ENCODE measurements at regions of chr12 and their contacts with region 1.

Region 1: GRCh38 chr12:121095544-121096198 is 37.0 kb upstream of the P2RX7 start:
- DNase-seq: no peak
- H3K4me3 ChIP-seq: peak overlapping the region in 1 of 3 experiments; percentile 0
- H3K27ac ChIP-seq: no peak overlapping the region
- H3K4me1 ChIP-seq: peaks cover 5% of the 10 kb centered on the region
- H3K27me3 ChIP-seq: no peaks in the 10 kb centered on the region
- CTCF ChIP-seq: peak; percentile 46 to 80

Region 2: GRCh38 chr12:121015825-121016766 is 79.6 kb before region 1 on chr12 and contains the start of gene C12orf43:
- CTCF ChIA-PET with region 1: no interaction called
- dilution Hi-C with region 1: no loop called
- in situ Hi-C with region 1: loop called in 1 of 2 experiments (anchors 10 kb)
- intact Hi-C with region 1: no loop called
- DNase-seq: peak; percentile 84
- H3K4me3 ChIP-seq: peak within 1 kb of the TSS; percentile 81 to 87 (median 82)
- H3K27ac ChIP-seq: peak within 1 kb of the TSS; percentile 64
- H3K4me1 ChIP-seq: peaks cover 9% of the 10 kb centered on the region
- H3K27me3 ChIP-seq: no peaks in the 10 kb centered on the region
- CTCF ChIP-seq: no peak
- total RNA-seq, gene C12orf43: 12.0 to 16.9 TPM

Region 3: DNA sequence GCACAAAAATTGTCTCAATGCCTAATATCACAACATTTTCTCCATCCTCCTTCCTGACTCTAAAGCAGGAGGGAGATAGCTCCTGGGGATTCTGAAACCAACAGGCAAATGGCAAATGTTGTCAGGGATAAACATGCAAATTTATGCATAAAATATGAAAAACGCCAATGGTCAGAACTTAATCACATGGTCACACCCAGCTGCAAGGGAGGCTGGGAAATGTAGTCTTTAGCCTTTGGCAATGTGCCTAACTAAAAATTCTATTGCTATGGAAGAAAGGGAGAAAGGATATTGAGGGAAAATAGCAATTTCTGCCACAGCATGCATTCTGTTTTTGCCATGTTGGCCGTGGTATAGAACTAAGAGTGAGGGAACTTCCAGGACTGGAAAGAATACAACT is 44.9 kb before region 1 on chr12:
- CTCF ChIA-PET with region 1: no interaction called
- dilution Hi-C with region 1: no loop called
- in situ Hi-C with region 1: no loop called
- intact Hi-C with region 1: no loop called
- DNase-seq: no peak
- H3K4me3 ChIP-seq: no peak overlapping the region
- H3K27ac ChIP-seq: no peak overlapping the region
- H3K4me1 ChIP-seq: no peaks in the 10 kb centered on the region
- H3K27me3 ChIP-seq: no peaks in the 10 kb centered on the region
- CTCF ChIP-seq: no peak

Region 4: GRCh38 chr12:121159467-121160307 is 64.0 kb after region 1 on chr12:
- CTCF ChIA-PET with region 1: no interaction called
- dilution Hi-C with region 1: loop called (anchors 5 kb)
- in situ Hi-C with region 1: no loop called
- intact Hi-C with region 1: no loop called
- DNase-seq: no peak
- H3K4me3 ChIP-seq: no peak overlapping the region
- H3K27ac ChIP-seq: no peak overlapping the region
- H3K4me1 ChIP-seq: no peaks in the 10 kb centered on the region
- H3K27me3 ChIP-seq: no peaks in the 10 kb centered on the region
- CTCF ChIP-seq: no peak